ENCODE measurements at regions of chr6 and their contacts with region 1.

Region 1: DNA sequence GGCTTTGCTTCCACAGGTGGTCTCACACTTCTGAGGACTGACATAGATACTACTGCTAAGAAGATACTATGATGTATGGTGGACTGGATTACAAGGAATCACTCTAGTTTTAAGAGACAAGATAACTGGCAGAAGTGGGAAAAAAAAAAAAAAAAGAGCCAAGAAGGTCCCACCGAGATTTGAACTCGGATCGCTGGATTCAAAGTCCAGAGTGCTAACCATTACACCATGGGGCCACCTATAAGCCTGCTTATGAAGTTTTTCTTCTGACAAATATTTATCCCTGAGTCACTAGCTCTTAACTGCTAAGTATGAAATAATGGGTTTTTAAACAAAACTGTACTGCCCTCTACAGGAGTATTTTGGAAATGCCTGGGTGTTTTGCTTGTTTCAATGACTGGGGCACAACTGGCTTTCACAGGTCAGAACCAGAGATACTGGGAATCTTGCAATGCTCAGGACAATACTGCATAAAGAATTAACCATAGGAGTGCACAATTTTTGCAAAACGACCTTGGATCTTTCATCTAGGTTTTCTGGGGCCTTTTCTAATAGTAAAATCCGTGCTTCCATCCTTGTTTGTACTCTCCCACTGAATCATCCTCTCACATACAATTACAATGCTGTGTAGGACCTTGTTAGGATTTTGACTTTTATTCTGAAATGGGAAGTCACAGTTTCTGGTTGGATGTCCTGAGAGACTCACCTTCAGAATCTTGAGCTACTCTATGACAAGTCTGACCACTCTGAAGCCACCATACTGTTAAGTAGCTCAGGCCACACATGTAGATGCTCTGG is 116.3 kb downstream of the OR2B2 start:
- DNase-seq: peak in 4 of 5 donors; percentile 39 to 77 (median 64)
- H3K4me3 ChIP-seq: no peak overlapping the region
- H3K4me3 Mint-ChIP-seq: peak overlapping the region in 1 of 7 donors; percentile 40
- H3K27ac ChIP-seq: no peak overlapping the region
- H3K27ac Mint-ChIP-seq: peak overlapping the region in 5 of 8 donors; percentile 3 to 64 (median 53)
- H3K4me1 ChIP-seq: peaks cover 20% of the 10 kb centered on the region
- H3K4me1 Mint-ChIP-seq: peaks cover 22 to 29% (median 28%) of the 10 kb centered on the region in 3 donors
- H3K27me3 ChIP-seq: peaks cover 8% of the 10 kb centered on the region
- H3K27me3 Mint-ChIP-seq: peaks cover 10% of the 10 kb centered on the region in 2 donors

Region 2: GRCh38 chr6:27126815-27127537 is 668.9 kb before region 1 on chr6:
- CTCF ChIA-PET with region 1: interaction called, 12 read pairs
- POLR2A ChIA-PET with region 1: no interaction called
- DNase-seq: peak; percentile 71 to 87 (median 77)
- H3K4me3 ChIP-seq: peak overlapping the region; percentile 54
- H3K4me3 Mint-ChIP-seq: peak overlapping the region; percentile 69 to 80 (median 77)
- H3K27ac ChIP-seq: peak overlapping the region; percentile 89
- H3K27ac Mint-ChIP-seq: peak overlapping the region; percentile 21 to 90 (median 86)
- H3K4me1 ChIP-seq: peaks cover 15% of the 10 kb centered on the region
- H3K4me1 Mint-ChIP-seq: peaks cover 16 to 21% (median 18%) of the 10 kb centered on the region in 3 donors
- H3K27me3 ChIP-seq: no peaks in the 10 kb centered on the region
- H3K27me3 Mint-ChIP-seq: no peaks in the 10 kb centered on the region

Region 3: GRCh38 chr6:27565821-27566766 is 229.8 kb before region 1 on chr6:
- CTCF ChIA-PET with region 1: no interaction called
- POLR2A ChIA-PET with region 1: no interaction called
- DNase-seq: no peak
- H3K4me3 ChIP-seq: no peak overlapping the region
- H3K4me3 Mint-ChIP-seq: no peak overlapping the region
- H3K27ac ChIP-seq: no peak overlapping the region
- H3K27ac Mint-ChIP-seq: peak overlapping the region in 1 of 8 donors; percentile 32
- H3K4me1 ChIP-seq: no peaks in the 10 kb centered on the region
- H3K4me1 Mint-ChIP-seq: peaks cover 4 to 9% (median 6%) of the 10 kb centered on the region in 3 donors
- H3K27me3 ChIP-seq: peaks cover 46% of the 10 kb centered on the region
- H3K27me3 Mint-ChIP-seq: peaks cover 43 to 77% of the 10 kb centered on the region in 2 donors

Region 4: GRCh38 chr6:27864906-27865849 is 69.3 kb after region 1 on chr6:
- CTCF ChIA-PET with region 1: interaction called, 11 read pairs
- POLR2A ChIA-PET with region 1: interaction called, 6 read pairs
- DNase-seq: peak; percentile 42 to 89 (median 81)
- H3K4me3 ChIP-seq: peak overlapping the region; percentile 63
- H3K4me3 Mint-ChIP-seq: peak overlapping the region; percentile 93 to 99 (median 96)
- H3K27ac ChIP-seq: peak overlapping the region; percentile 83
- H3K27ac Mint-ChIP-seq: peak overlapping the region; percentile 87 to 99 (median 97)
- H3K4me1 ChIP-seq: peaks cover 25% of the 10 kb centered on the region
- H3K4me1 Mint-ChIP-seq: peaks cover 36 to 50% (median 45%) of the 10 kb centered on the region in 3 donors
- H3K27me3 ChIP-seq: no peaks in the 10 kb centered on the region
- H3K27me3 Mint-ChIP-seq: no peaks in the 10 kb centered on the region

Region 5: GRCh38 chr6:27902335-27903314 is 106.7 kb after region 1 on chr6:
- CTCF ChIA-PET with region 1: no interaction called
- POLR2A ChIA-PET with region 1: no interaction called
- DNase-seq: peak; percentile 78 to 90 (median 85)
- H3K4me3 ChIP-seq: peak overlapping the region; percentile 71
- H3K4me3 Mint-ChIP-seq: peak overlapping the region; percentile 90 to 94 (median 92)
- H3K27ac ChIP-seq: peak overlapping the region; percentile 68
- H3K27ac Mint-ChIP-seq: peak overlapping the region; percentile 94 to 98 (median 97)
- H3K4me1 ChIP-seq: peaks cover 5% of the 10 kb centered on the region
- H3K4me1 Mint-ChIP-seq: peaks cover 10 to 16% (median 11%) of the 10 kb centered on the region in 3 donors
- H3K27me3 ChIP-seq: peaks cover 2% of the 10 kb centered on the region
- H3K27me3 Mint-ChIP-seq: peaks cover 11 to 18% of the 10 kb centered on the region in 2 donors

Region 6: DNA sequence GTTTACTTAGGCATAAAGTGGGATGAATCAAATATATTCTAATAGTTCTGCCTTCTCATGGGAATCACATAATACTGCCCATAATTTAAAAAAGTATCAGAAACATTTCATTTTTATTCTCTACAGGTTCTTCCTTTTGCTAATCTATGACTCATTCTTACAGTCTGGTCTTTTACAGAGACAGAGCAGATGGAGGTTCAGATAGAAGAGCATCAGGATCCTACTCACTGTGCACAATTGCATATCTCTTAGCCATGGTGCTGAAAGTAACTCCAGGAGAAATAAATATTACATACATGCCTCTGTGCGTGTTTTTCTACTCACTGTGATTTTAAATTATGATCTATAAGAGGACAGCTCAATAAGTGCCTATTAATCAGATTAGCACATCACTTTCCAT is 144.9 kb after region 1 on chr6:
- CTCF ChIA-PET with region 1: no interaction called
- POLR2A ChIA-PET with region 1: no interaction called
- DNase-seq: no peak
- H3K4me3 ChIP-seq: no peak overlapping the region
- H3K4me3 Mint-ChIP-seq: no peak overlapping the region
- H3K27ac ChIP-seq: no peak overlapping the region
- H3K27ac Mint-ChIP-seq: no peak overlapping the region
- H3K4me1 ChIP-seq: no peaks in the 10 kb centered on the region
- H3K4me1 Mint-ChIP-seq: no peaks in the 10 kb centered on the region
- H3K27me3 ChIP-seq: peaks cover 3% of the 10 kb centered on the region
- H3K27me3 Mint-ChIP-seq: peaks cover 21 to 69% of the 10 kb centered on the region in 2 donors

Measured in CD8-positive, alpha-beta memory T cell (primary cell).